Esophagus squamous epithelium (tissue), 5 donors: ENCODE measurements at regions of chr3 and their contacts with region 1.

Region 1: DNA sequence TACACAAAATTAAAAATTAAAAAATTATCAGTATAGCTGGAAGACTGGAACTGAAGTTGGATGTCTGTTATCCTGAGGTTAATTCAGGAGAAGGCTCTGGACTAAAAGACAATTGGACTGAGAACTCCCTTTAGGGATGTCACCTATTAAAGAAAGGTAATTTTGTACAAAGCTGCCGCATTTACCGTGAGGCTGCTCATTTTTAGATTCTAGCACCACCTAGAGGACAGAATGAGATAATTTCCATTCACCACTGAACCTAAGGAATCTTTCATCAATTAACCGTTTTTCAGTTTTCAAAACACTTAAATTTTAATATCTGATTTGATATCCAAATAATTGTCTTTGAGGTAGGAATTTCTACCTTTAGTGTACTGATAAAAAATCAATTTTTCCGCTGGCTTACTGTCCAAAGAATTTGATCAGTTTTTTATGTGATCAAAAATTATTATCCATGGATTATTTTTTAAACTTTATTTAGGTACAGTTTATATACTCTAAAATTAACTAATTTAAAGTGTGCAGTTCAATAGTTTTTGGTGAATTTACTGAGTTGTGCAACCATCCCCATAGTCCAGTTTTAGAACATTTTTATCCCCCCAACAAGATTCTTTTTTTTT is 106.7 kb upstream of the TNIK start:
- DNase-seq: no peak
- H3K4me3 ChIP-seq: no peak overlapping the region
- H3K27ac ChIP-seq: no peak overlapping the region
- H3K4me1 ChIP-seq: no peaks in the 10 kb centered on the region
- H3K27me3 ChIP-seq: no peaks in the 10 kb centered on the region
- CTCF ChIP-seq: peak; percentile 57 to 84 (median 78)
- POLR2A ChIP-seq: no peak

Region 2: GRCh38 chr3:170961616-170962400 is 605.1 kb before region 1 on chr3:
- intact Hi-C with region 1: loop called (anchors 10 kb)
- DNase-seq: no peak
- H3K4me3 ChIP-seq: no peak overlapping the region
- H3K27ac ChIP-seq: no peak overlapping the region
- H3K4me1 ChIP-seq: no peaks in the 10 kb centered on the region
- H3K27me3 ChIP-seq: no peaks in the 10 kb centered on the region
- CTCF ChIP-seq: peak; percentile 40 to 67 (median 50)
- POLR2A ChIP-seq: no peak

Region 3: GRCh38 chr3:171049861-171050444 is 517.0 kb before region 1 on chr3:
- intact Hi-C with region 1: loop called (anchors 10 kb)
- DNase-seq: no peak
- H3K4me3 ChIP-seq: no peak overlapping the region
- H3K27ac ChIP-seq: no peak overlapping the region
- H3K4me1 ChIP-seq: no peaks in the 10 kb centered on the region
- H3K27me3 ChIP-seq: no peaks in the 10 kb centered on the region
- CTCF ChIP-seq: peak in 5 of 6 experiments; percentile 28 to 48 (median 45)
- POLR2A ChIP-seq: no peak